A549 (cell line): ENCODE measurements at regions of chr20 and their contacts with region 1.

Region 1: GRCh38 chr20:48620519-48621254 is 207.1 kb downstream of the PREX1 start:
- DNase-seq: peak; percentile 84 to 92
- ATAC-seq: peak; percentile 87 to 94
- H3K4me3 ChIP-seq: peak overlapping the region; percentile 42
- H3K27ac ChIP-seq: peak overlapping the region; percentile 80 to 83
- H3K4me1 ChIP-seq: peaks cover 28% of the 10 kb centered on the region
- CTCF ChIP-seq: peak; percentile 73
- EP300 ChIP-seq: no peak
- POLR2A ChIP-seq: no peak
- RAD21 ChIP-seq: peak; percentile 93 to 95

Region 2: GRCh38 chr20:47677635-47678453 is 942.8 kb before region 1 on chr20:
- CTCF ChIA-PET with region 1: interaction called, 232 read pairs
- POLR2A ChIA-PET with region 1: interaction called, 3 read pairs
- DNase-seq: peak; percentile 59 to 67
- ATAC-seq: peak; percentile 33 to 71
- H3K4me3 ChIP-seq: no peak overlapping the region
- H3K27ac ChIP-seq: no peak overlapping the region
- H3K4me1 ChIP-seq: no peaks in the 10 kb centered on the region
- CTCF ChIP-seq: peak; percentile 86
- EP300 ChIP-seq: no peak
- POLR2A ChIP-seq: no peak
- RAD21 ChIP-seq: peak; percentile 89 to 91

Region 3: GRCh38 chr20:47725248-47725973 is 895.3 kb before region 1 on chr20:
- CTCF ChIA-PET with region 1: interaction called, 44 read pairs
- POLR2A ChIA-PET with region 1: no interaction called
- DNase-seq: peak; percentile 85 to 88
- ATAC-seq: peak; percentile 81 to 92
- H3K4me3 ChIP-seq: no peak overlapping the region
- H3K27ac ChIP-seq: no peak overlapping the region
- H3K4me1 ChIP-seq: no peaks in the 10 kb centered on the region
- CTCF ChIP-seq: peak; percentile 81
- EP300 ChIP-seq: no peak
- POLR2A ChIP-seq: no peak
- RAD21 ChIP-seq: peak; percentile 81 to 90

Region 4: GRCh38 chr20:47805799-47806350 is 814.8 kb before region 1 on chr20:
- CTCF ChIA-PET with region 1: interaction called, 12 read pairs
- POLR2A ChIA-PET with region 1: no interaction called
- DNase-seq: no peak
- ATAC-seq: no peak
- H3K4me3 ChIP-seq: no peak overlapping the region
- H3K27ac ChIP-seq: no peak overlapping the region
- H3K4me1 ChIP-seq: peaks cover 6% of the 10 kb centered on the region; the same call in 2 of the 3 replicates
- CTCF ChIP-seq: no peak
- EP300 ChIP-seq: no peak
- POLR2A ChIP-seq: no peak
- RAD21 ChIP-seq: no peak

Region 5: GRCh38 chr20:48259456-48260278 is 361.0 kb before region 1 on chr20:
- CTCF ChIA-PET with region 1: no interaction called
- POLR2A ChIA-PET with region 1: no interaction called
- DNase-seq: no peak
- ATAC-seq: no peak
- H3K4me3 ChIP-seq: no peak overlapping the region
- H3K27ac ChIP-seq: no peak overlapping the region
- H3K4me1 ChIP-seq: no peaks in the 10 kb centered on the region
- CTCF ChIP-seq: no peak
- EP300 ChIP-seq: no peak
- POLR2A ChIP-seq: no peak
- RAD21 ChIP-seq: no peak

Region 6: DNA sequence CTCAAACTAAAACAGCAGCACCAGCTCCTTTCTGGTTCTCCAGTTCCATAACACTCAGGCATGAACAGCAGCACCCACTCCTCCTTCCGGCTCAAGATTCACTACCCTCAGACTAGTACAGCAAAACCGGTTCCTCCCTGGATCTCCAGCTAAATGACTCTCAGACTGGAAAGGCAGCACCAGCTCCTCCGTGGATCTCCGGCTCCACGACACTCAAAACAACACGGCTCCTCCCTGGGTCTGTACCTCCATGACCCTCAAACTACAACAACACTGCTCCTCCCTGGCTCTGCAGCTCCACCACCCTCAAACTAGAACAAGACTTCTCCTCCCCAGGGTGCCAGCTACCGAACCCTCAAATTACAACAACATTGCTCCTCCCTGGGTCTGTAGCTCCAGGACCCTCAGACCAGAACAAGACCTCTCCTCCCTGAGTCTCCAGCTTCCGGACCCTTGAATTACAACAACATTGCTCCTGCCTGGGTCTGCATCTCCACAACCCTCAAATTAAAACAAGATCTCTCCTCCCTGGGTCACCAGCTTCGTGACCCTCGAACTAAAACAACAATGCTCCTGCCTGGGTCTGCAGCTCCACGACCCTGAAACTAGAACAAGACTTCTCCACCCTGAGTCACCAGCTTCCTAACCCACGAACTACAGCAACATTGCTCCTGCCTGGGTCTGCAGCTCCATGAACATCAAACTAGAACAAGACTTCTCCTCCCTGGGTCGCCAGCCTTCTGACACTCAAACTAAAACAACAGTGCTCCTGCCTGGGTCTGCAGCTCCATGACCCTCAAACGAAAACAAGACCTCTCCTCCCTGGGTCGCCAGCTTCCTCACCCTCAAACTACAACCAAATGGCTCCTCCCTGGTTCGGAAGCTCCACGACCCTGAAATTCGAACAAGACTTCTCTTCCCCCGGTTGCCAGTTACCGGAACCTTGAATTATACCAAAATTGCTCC is 117.6 kb before region 1 on chr20:
- CTCF ChIA-PET with region 1: interaction called, 13 read pairs
- POLR2A ChIA-PET with region 1: no interaction called
- DNase-seq: no peak
- ATAC-seq: peak in 1 of 2 experiments; percentile 47; a peak in 2 of 6 replicates
- H3K4me3 ChIP-seq: no peak overlapping the region; the same call in 2 of the 3 replicates
- H3K27ac ChIP-seq: no peak overlapping the region
- H3K4me1 ChIP-seq: no peaks in the 10 kb centered on the region
- CTCF ChIP-seq: no peak
- EP300 ChIP-seq: no peak
- POLR2A ChIP-seq: no peak
- RAD21 ChIP-seq: no peak

Region 7: DNA sequence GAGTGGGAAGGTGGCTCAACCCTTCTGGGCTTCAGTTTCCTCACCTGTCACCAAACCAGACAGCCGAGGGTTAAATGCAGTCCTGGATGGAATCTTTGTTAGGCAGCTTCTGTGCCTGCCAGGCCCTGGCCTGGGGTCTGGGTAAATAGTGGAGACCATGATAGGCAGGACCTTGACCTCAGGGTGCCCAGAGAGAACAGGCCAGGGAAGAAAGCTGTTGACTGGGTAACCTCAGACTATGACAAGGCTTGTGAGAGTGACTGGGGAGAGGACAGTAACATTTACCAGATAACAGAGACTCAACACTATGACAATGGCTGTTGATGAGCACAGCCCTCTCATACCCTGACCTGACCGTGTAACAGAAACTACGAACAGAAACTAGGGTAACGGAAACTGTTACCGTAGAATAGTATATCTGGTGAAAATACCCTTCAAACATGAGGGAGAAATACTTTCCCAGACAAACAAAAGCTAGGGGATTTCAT is 11.2 kb before region 1 on chr20:
- CTCF ChIA-PET with region 1: interaction called, 19 read pairs
- POLR2A ChIA-PET with region 1: no interaction called
- DNase-seq: no peak
- ATAC-seq: no peak
- H3K4me3 ChIP-seq: no peak overlapping the region
- H3K27ac ChIP-seq: no peak overlapping the region
- H3K4me1 ChIP-seq: no peaks in the 10 kb centered on the region
- CTCF ChIP-seq: no peak
- EP300 ChIP-seq: no peak
- POLR2A ChIP-seq: no peak
- RAD21 ChIP-seq: no peak